Aorta (tissue), 5 donors: ENCODE measurements at regions of chr1 and their contacts with region 1.

Region 1: DNA sequence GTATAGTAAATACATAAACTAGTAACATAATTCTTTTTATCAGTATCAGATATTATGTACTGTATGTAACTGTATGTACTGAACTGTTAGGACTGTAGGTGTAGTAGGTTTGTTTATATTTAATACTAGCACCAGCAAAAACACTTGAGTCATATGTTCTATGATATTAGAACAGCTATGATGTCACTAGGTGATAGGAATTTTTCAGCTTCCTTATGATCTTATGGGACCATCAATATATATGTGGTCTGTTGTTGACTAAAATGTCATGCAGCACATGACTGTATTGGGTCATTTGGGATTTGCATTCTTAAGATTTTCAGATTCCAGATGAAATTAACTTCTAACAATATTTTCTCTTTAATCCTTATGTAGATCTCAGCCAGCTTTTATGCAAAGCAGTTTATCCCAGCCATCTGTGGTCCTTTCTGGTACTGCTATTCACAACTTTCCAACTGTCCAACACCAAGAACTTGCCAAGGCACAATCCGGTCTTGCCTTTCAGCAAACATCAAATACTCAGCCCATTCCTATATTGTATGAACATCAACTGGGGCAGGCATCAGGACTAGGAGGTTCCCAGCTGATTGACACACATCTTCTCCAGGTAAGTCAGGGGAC is 38.4 kb upstream of the MYOCOS start:
- DNase-seq: no peak
- ATAC-seq: no peak
- H3K4me3 ChIP-seq: no peak overlapping the region
- H3K27ac ChIP-seq: no peak overlapping the region
- H3K4me1 ChIP-seq: no peaks in the 10 kb centered on the region
- H3K27me3 ChIP-seq: no peaks in the 10 kb centered on the region

Region 2: GRCh38 chr1:171521567-171521966 is 62.1 kb before region 1 on chr1:
- intact Hi-C with region 1: loop called in 1 of 2 experiments (anchors 10 kb)
- DNase-seq: no peak
- ATAC-seq: no peak
- H3K4me3 ChIP-seq: no peak overlapping the region
- H3K27ac ChIP-seq: no peak overlapping the region
- H3K4me1 ChIP-seq: no peaks in the 10 kb centered on the region
- H3K27me3 ChIP-seq: no peaks in the 10 kb centered on the region